T-cell (primary cell): ENCODE measurements at regions of chr5 and their contacts with region 1.

Region 1: GRCh38 chr5:64229163-64229774 is 63.6 kb downstream of the RNF180 start:
- DNase-seq: peak in 1 of 35 experiments; percentile 14
- ATAC-seq: no peak
- H3K4me3 ChIP-seq: no peak overlapping the region
- H3K4me3 Mint-ChIP-seq: no peak overlapping the region
- H3K27ac ChIP-seq: no peak overlapping the region
- H3K27ac Mint-ChIP-seq: no peak overlapping the region
- H3K4me1 ChIP-seq: no peaks in the 10 kb centered on the region
- H3K4me1 Mint-ChIP-seq: no peaks in the 10 kb centered on the region
- H3K27me3 ChIP-seq: no peaks in the 10 kb centered on the region
- H3K27me3 Mint-ChIP-seq: no peaks in the 10 kb centered on the region

Region 2: GRCh38 chr5:64518809-64519208 is 289.5 kb after region 1 on chr5:
- CTCF ChIA-PET with region 1: no interaction called
- POLR2A ChIA-PET with region 1: no interaction called
- DNase-seq: no peak
- ATAC-seq: no peak
- H3K4me3 ChIP-seq: no peak overlapping the region
- H3K4me3 Mint-ChIP-seq: no peak overlapping the region
- H3K27ac ChIP-seq: no peak overlapping the region
- H3K27ac Mint-ChIP-seq: no peak overlapping the region
- H3K4me1 ChIP-seq: no peaks in the 10 kb centered on the region
- H3K4me1 Mint-ChIP-seq: no peaks in the 10 kb centered on the region
- H3K27me3 ChIP-seq: no peaks in the 10 kb centered on the region
- H3K27me3 Mint-ChIP-seq: peaks cover 0 to 4% of the 10 kb centered on the region in 2 donors

Region 3: GRCh38 chr5:65229841-65230240 is 1000.6 kb after region 1 on chr5:
- CTCF ChIA-PET with region 1: interaction called in 1 of 2 experiments, 11 read pairs
- POLR2A ChIA-PET with region 1: no interaction called
- DNase-seq: no peak
- ATAC-seq: no peak
- H3K4me3 ChIP-seq: no peak overlapping the region
- H3K4me3 Mint-ChIP-seq: no peak overlapping the region
- H3K27ac ChIP-seq: no peak overlapping the region
- H3K27ac Mint-ChIP-seq: no peak overlapping the region
- H3K4me1 ChIP-seq: no peaks in the 10 kb centered on the region
- H3K4me1 Mint-ChIP-seq: no peaks in the 10 kb centered on the region
- H3K27me3 ChIP-seq: no peaks in the 10 kb centered on the region
- H3K27me3 Mint-ChIP-seq: no peaks in the 10 kb centered on the region

Region 4: DNA sequence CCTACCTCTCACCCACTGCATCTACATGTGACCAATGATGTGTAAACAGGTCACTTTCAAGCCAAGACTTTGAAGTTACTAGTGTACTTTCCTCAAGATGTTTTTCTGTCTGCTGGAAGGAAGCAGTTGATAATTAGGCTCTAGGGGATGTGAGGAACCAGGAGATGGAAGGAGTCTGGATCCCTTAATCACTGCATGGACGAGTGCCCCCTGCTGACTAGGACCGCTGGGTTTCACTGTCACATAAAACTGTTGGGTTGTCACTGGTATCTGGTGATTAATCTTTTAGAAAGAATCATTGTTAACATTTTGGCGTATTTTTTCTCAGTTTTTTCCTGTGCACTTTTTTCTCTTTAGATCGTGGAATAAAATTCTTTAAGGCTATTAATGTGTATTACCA is 1994.4 kb after region 1 on chr5:
- CTCF ChIA-PET with region 1: no interaction called
- POLR2A ChIA-PET with region 1: no interaction called
- DNase-seq: peak in 1 of 35 experiments; percentile 3
- ATAC-seq: no peak
- H3K4me3 ChIP-seq: no peak overlapping the region
- H3K4me3 Mint-ChIP-seq: no peak overlapping the region
- H3K27ac ChIP-seq: no peak overlapping the region
- H3K27ac Mint-ChIP-seq: no peak overlapping the region
- H3K4me1 ChIP-seq: no peaks in the 10 kb centered on the region
- H3K4me1 Mint-ChIP-seq: no peaks in the 10 kb centered on the region
- H3K27me3 ChIP-seq: no peaks in the 10 kb centered on the region
- H3K27me3 Mint-ChIP-seq: no peaks in the 10 kb centered on the region